ENCODE measurements at regions of chr14 and their contacts with region 1.

Region 1: GRCh38 chr14:75249251-75249957 is 29.2 kb upstream of the FOS start:
- DNase-seq: peak; percentile 90 to 96 (median 95)
- H3K4me3 ChIP-seq: peak overlapping the region in 1 of 2 donors; percentile 54
- H3K4me3 Mint-ChIP-seq: peak overlapping the region; percentile 63 to 85 (median 78)
- H3K27ac ChIP-seq: peak overlapping the region; percentile 80
- H3K27ac Mint-ChIP-seq: peak overlapping the region; percentile 92 to 99 (median 97)
- H3K4me1 ChIP-seq: peaks cover 58% of the 10 kb centered on the region
- H3K4me1 Mint-ChIP-seq: peaks cover 38 to 70% (median 56%) of the 10 kb centered on the region in 4 donors
- H3K27me3 ChIP-seq: no peaks in the 10 kb centered on the region
- H3K27me3 Mint-ChIP-seq: no peaks in the 10 kb centered on the region

Region 2: GRCh38 chr14:75126679-75127473 is 122.5 kb before region 1 on chr14 and contains the start of gene NEK9:
- CTCF ChIA-PET with region 1: interaction called, 3 read pairs
- POLR2A ChIA-PET with region 1: no interaction called
- intact Hi-C with region 1: loop called (anchors 5 kb)
- DNase-seq: peak; percentile 86 to 92 (median 90)
- H3K4me3 ChIP-seq: peak within 1 kb of the TSS; percentile 80 to 99
- H3K4me3 Mint-ChIP-seq: peak within 1 kb of the TSS; percentile 88 to 98 (median 97)
- H3K27ac ChIP-seq: peak within 1 kb of the TSS; percentile 94
- H3K27ac Mint-ChIP-seq: peak within 1 kb of the TSS; percentile 95 to 99 (median 99)
- H3K4me1 ChIP-seq: peaks cover 42% of the 10 kb centered on the region
- H3K4me1 Mint-ChIP-seq: peaks cover 29 to 52% (median 34%) of the 10 kb centered on the region in 4 donors
- H3K27me3 ChIP-seq: no peaks in the 10 kb centered on the region
- H3K27me3 Mint-ChIP-seq: no peaks in the 10 kb centered on the region
- total RNA-seq, gene NEK9: 129 to 133 TPM

Region 3: GRCh38 chr14:75158843-75159614 is 90.4 kb before region 1 on chr14:
- CTCF ChIA-PET with region 1: no interaction called
- POLR2A ChIA-PET with region 1: no interaction called
- intact Hi-C with region 1: loop called (anchors 5 kb)
- DNase-seq: no peak
- H3K4me3 ChIP-seq: no peak overlapping the region
- H3K4me3 Mint-ChIP-seq: peak overlapping the region in 2 of 8 donors; percentile 1 to 44
- H3K27ac ChIP-seq: no peak overlapping the region
- H3K27ac Mint-ChIP-seq: peak overlapping the region in 6 of 7 donors; percentile 14 to 76 (median 59)
- H3K4me1 ChIP-seq: peaks cover 69% of the 10 kb centered on the region
- H3K4me1 Mint-ChIP-seq: peaks cover 47 to 75% (median 62%) of the 10 kb centered on the region in 4 donors
- H3K27me3 ChIP-seq: no peaks in the 10 kb centered on the region
- H3K27me3 Mint-ChIP-seq: no peaks in the 10 kb centered on the region

Region 4: GRCh38 chr14:75278422-75279161 is 29.2 kb after region 1 on chr14 and contains the start of gene FOS:
- CTCF ChIA-PET with region 1: interaction called, 6 read pairs
- POLR2A ChIA-PET with region 1: interaction called, 11 read pairs
- intact Hi-C with region 1: loop called (anchors 1 kb)
- DNase-seq: peak; percentile 97 to 99 (median 98)
- H3K4me3 ChIP-seq: peak within 1 kb of the TSS; percentile 89 to 95
- H3K4me3 Mint-ChIP-seq: peak within 1 kb of the TSS; percentile 90 to 98 (median 94)
- H3K27ac ChIP-seq: peak within 1 kb of the TSS; percentile 75
- H3K27ac Mint-ChIP-seq: peak within 1 kb of the TSS; percentile 98 to 100 (median 99)
- H3K4me1 ChIP-seq: peaks cover 56% of the 10 kb centered on the region
- H3K4me1 Mint-ChIP-seq: peaks cover 41 to 88% (median 53%) of the 10 kb centered on the region in 4 donors
- H3K27me3 ChIP-seq: peaks cover 6% of the 10 kb centered on the region
- H3K27me3 Mint-ChIP-seq: peaks cover 0 to 24% of the 10 kb centered on the region in 2 donors
- total RNA-seq, gene FOS: 4.1 to 4.3 TPM

Region 5: GRCh38 chr14:75301666-75302325 is 52.4 kb after region 1 on chr14:
- CTCF ChIA-PET with region 1: interaction called, 10 read pairs
- POLR2A ChIA-PET with region 1: no interaction called
- intact Hi-C with region 1: no loop called
- DNase-seq: no peak
- H3K4me3 ChIP-seq: no peak overlapping the region
- H3K4me3 Mint-ChIP-seq: no peak overlapping the region
- H3K27ac ChIP-seq: no peak overlapping the region
- H3K27ac Mint-ChIP-seq: peak overlapping the region in 2 of 7 donors; percentile 39 to 46
- H3K4me1 ChIP-seq: peaks cover 8% of the 10 kb centered on the region
- H3K4me1 Mint-ChIP-seq: peaks cover 3 to 23% (median 10%) of the 10 kb centered on the region in 4 donors
- H3K27me3 ChIP-seq: no peaks in the 10 kb centered on the region
- H3K27me3 Mint-ChIP-seq: peaks cover 0 to 2% of the 10 kb centered on the region in 2 donors

Measured in CD4-positive, alpha-beta memory T cell (primary cell).